Endothelial cell of umbilical vein (primary cell): ENCODE measurements at regions of chr2 and their contacts with region 1.

Region 1: GRCh38 chr2:168346725-168347477 is 99.5 kb upstream of the STK39 start:
- DNase-seq: peak; percentile 74
- H3K4me3 ChIP-seq: peak overlapping the region; percentile 33 to 89 (median 88)
- H3K27ac ChIP-seq: no peak overlapping the region
- H3K4me1 ChIP-seq: peaks cover 12% of the 10 kb centered on the region
- H3K27me3 ChIP-seq: peaks cover 5 to 6% of the 10 kb centered on the region in 2 experiments
- CTCF ChIP-seq: peak; percentile 65 to 66
- POLR2A ChIP-seq: no peak

Region 2: GRCh38 chr2:168136392-168136977 is 210.4 kb before region 1 on chr2:
- CTCF ChIA-PET with region 1: interaction called, 3 read pairs
- POLR2A ChIA-PET with region 1: no interaction called
- dilution Hi-C with region 1: no loop called
- intact Hi-C with region 1: loop called (anchors 5 kb)
- DNase-seq: peak; percentile 57
- H3K4me3 ChIP-seq: no peak overlapping the region
- H3K27ac ChIP-seq: no peak overlapping the region
- H3K4me1 ChIP-seq: peaks cover 9% of the 10 kb centered on the region
- H3K27me3 ChIP-seq: no peaks in the 10 kb centered on the region
- CTCF ChIP-seq: peak; percentile 19 to 36
- POLR2A ChIP-seq: no peak

Region 3: DNA sequence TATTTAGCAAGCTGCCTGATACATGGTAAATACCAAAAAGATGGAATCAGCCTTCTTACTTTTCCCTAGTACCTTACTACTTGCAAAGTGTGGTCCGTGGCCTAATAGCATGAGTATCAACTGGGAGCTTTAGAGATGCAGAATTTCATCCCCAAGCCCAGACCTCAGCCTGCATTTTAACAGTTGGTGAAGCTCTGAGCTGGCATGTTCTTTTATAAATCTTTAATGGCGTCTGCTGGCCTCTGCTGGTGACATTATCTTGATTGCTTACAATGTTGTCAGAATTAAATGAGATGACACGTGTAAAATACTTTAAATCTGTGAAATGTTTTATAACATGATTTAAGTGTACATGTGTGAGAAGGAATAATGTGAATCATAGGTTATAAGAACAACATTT is 340.4 kb after region 1 on chr2:
- CTCF ChIA-PET with region 1: interaction called, 76 read pairs
- POLR2A ChIA-PET with region 1: no interaction called
- dilution Hi-C with region 1: no loop called
- intact Hi-C with region 1: loop called (anchors 1 kb)
- DNase-seq: peak; percentile 44
- H3K4me3 ChIP-seq: no peak overlapping the region
- H3K27ac ChIP-seq: peak overlapping the region; percentile 65
- H3K4me1 ChIP-seq: peaks cover 17% of the 10 kb centered on the region
- H3K27me3 ChIP-seq: no peaks in the 10 kb centered on the region
- CTCF ChIP-seq: no peak
- POLR2A ChIP-seq: no peak

Region 4: DNA sequence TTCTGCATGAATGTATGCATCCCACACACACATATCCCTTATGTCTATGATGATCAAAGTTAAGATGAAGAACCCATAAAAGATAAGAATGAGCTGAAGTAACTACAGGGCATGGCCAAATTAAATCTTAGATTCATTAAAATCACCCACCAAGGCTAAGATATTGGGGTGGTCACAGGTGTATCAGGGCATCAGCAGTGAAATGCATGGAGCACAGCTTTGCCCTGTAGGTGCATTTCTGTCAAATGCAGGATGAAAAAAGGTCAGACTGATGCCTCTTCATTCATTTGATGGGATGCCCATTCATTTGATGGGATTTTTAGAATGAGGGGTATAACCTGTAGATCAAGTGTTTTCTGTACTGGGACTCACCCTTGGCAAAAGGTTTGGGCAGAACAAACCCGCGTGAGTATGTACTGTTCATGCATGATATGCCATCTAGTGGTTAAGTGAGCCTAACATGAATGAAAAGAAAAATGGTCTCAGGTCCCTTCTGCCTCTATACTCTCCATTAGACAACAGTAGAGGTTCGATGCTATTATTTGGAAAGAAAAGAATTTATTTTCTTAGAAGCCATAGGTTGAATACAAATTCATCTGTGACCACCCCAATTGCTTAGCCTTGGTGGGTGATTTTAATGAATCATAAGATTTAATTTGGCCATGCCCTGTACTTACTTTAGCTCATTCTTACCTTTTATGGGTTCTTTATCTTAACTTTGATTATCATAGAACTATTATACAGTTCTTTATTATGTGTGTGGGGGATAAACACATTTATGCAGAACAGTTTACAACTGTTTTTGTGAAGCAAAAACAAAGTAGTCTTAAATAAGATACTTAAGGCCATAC is 412.3 kb after region 1 on chr2:
- CTCF ChIA-PET with region 1: interaction called, 107 read pairs
- POLR2A ChIA-PET with region 1: no interaction called
- dilution Hi-C with region 1: no loop called
- intact Hi-C with region 1: loop called (anchors 1 kb)
- DNase-seq: peak; percentile 58
- H3K4me3 ChIP-seq: no peak overlapping the region
- H3K27ac ChIP-seq: no peak overlapping the region
- H3K4me1 ChIP-seq: peaks cover 14% of the 10 kb centered on the region
- H3K27me3 ChIP-seq: no peaks in the 10 kb centered on the region
- CTCF ChIP-seq: peak; percentile 40 to 62
- POLR2A ChIP-seq: no peak

Region 5: DNA sequence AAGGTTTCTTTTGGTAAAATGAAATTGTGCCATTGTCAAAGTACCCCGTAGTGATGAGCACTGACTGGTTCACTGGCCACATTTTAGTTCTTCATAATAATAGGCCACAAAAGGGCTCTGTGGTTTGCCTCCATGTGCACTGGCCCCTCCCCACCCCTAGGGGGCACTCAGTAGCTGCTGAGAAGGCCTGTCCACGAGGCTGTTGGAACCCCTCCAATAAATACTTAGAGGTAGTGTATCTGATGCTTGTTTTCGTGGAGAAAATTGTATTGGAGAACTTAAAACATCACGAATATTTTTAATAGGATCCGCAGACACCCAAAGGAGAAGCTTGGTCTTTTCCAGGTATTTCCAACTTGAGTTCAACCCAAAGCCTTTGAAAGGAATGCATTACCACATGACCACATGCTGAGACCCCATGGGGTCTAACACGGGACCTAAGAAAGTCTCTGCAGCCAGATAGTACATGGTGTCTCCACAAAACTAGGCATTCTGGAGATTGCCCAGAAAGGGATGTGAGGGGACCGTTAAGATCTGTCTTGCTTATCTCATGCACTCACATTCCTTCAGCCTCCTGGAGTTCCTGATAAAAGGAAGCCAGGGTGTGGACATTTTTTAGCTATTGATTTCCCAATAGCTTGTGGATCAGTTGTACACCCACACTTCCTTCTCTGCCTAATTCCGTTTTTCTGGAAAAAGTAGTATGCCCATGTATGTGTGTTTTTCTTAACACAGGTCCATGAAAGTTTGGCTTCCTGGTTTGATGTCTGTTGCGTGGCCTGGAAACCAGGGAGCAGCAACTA is 427.0 kb after region 1 on chr2:
- CTCF ChIA-PET with region 1: interaction called, 12 read pairs
- POLR2A ChIA-PET with region 1: no interaction called
- dilution Hi-C with region 1: no loop called
- intact Hi-C with region 1: loop called (anchors 1 kb)
- DNase-seq: peak; percentile 82
- H3K4me3 ChIP-seq: no peak overlapping the region
- H3K27ac ChIP-seq: no peak overlapping the region
- H3K4me1 ChIP-seq: peaks cover 4% of the 10 kb centered on the region
- H3K27me3 ChIP-seq: no peaks in the 10 kb centered on the region
- CTCF ChIP-seq: peak; percentile 93 to 96
- POLR2A ChIP-seq: no peak